HepG2 (cell line): ENCODE measurements at regions of chr2 and their contacts with region 1.

Region 1: GRCh38 chr2:165558832-165559231 is 89.3 kb downstream of the CSRNP3 start:
- DNase-seq: no peak
- ATAC-seq: peak; percentile 70
- H3K4me3 ChIP-seq: no peak overlapping the region
- H3K27ac ChIP-seq: no peak overlapping the region
- H3K4me1 ChIP-seq: no peaks in the 10 kb centered on the region
- H3K27me3 ChIP-seq: no peaks in the 10 kb centered on the region
- CTCF ChIP-seq: peak; percentile 27
- EP300 ChIP-seq: no peak
- POLR2A ChIP-seq: no peak
- RAD21 ChIP-seq: no peak

Region 2: GRCh38 chr2:165698444-165698894 is 139.6 kb after region 1 on chr2:
- CTCF ChIA-PET with region 1: no interaction called
- POLR2A ChIA-PET with region 1: no interaction called
- in situ Hi-C with region 1: no loop called
- intact Hi-C with region 1: loop called (anchors 10 kb)
- DNase-seq: peak; percentile 44
- ATAC-seq: peak; percentile 95
- H3K4me3 ChIP-seq: no peak overlapping the region
- H3K27ac ChIP-seq: no peak overlapping the region
- H3K4me1 ChIP-seq: no peaks in the 10 kb centered on the region
- H3K27me3 ChIP-seq: 0 out of 5 replicates have a peak, but pooled peaks cover 0 to 2% of the 10 kb centered on the region in 2 experiments
- CTCF ChIP-seq: peak; percentile 61
- EP300 ChIP-seq: no peak
- POLR2A ChIP-seq: no peak
- RAD21 ChIP-seq: no peak